ENCODE measurements at regions of chr3 and their contacts with region 1.

Region 1: DNA sequence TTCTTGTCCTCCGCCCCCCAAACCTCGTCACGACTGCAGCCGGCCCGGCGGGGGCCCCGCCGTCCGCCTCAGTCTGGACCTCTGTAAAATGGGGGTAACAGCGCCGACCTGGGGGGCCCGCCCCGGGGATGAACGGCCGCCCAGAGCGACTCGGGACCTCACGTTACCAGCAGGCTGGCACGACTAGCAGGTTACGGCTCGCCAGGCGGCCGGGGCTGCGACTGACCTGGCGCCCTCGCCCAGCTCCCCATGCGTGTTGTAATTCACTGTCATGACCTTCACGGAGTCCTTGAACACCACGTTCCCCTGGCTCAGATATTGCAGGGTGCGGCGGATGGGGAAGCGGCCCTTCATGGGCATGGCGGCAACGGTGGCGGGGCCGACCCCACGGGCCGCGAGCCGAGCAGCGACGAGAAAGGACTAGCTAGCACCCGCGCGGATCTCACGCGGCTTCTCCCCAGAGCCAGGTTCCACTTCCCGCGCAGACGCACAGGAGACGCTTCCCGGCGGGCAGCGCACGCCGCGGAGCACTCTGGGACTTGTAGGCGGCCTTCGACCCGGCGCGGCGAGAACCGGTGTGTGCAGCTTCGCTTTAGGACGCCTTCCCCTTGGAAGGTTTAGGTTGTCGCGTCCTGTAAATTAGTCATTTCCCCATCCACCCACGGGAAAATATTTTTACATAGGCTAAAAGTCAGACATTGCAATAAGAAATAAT is at the start of gene MRPS25:
- DNase-seq: peak; percentile 90
- H3K4me3 Mint-ChIP-seq: peak within 1 kb of the TSS; percentile 96
- H3K27ac Mint-ChIP-seq: peak within 1 kb of the TSS; percentile 95
- H3K4me1 Mint-ChIP-seq: peaks cover 20% of the 10 kb centered on the region
- H3K27me3 Mint-ChIP-seq: no peaks in the 10 kb centered on the region
- total RNA-seq, gene MRPS25: 96.5 and 105 TPM in 2 replicates

Region 2: DNA sequence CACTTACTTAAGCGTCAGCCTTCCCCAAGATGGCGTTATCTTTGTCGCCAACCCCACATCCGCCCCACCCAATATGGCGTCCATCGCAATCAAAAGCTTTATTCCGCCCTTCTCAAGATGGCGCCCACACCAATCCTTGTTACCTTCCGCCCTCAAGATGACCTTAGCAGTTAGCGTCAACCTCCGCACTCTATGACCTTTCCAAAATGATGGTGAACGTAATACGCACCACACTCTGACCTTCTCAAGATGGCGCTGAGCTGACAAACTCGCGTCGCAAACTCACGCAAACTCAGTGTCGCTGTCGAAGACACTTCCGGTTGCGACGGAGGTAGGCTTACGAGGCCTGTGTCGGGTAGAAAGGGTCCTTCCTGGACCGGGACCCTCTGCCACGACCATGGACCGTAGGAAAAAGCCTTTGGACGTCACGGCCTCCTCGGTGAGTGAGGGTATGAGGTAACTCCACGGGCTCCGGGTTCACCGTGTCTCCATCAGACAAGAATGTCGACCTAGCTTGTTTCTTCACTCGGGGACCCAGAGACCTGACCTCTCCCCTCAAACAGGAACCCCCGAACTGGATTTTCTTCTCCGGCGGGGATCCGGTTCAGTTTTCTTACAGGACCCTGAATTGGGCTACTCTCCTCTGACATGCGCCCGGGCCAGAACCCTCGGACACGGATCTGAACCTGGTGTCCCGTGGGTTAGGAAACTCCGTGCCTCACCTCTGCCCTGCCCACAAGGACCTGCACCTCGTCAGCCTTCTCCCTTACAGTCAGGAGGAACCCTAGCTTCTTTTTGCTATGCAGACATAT is 413.3 kb before region 1 on chr3 and contains the start of gene CCDC174:
- intact Hi-C with region 1: loop called (anchors 1 kb)
- DNase-seq: peak; percentile 94
- H3K4me3 Mint-ChIP-seq: peak within 1 kb of the TSS; percentile 99
- H3K27ac Mint-ChIP-seq: peak within 1 kb of the TSS; percentile 90
- H3K4me1 Mint-ChIP-seq: peaks cover 38% of the 10 kb centered on the region
- H3K27me3 Mint-ChIP-seq: peaks cover 4% of the 10 kb centered on the region
- total RNA-seq, gene CCDC174: 16.6 and 21.7 TPM in 2 replicates

Region 3: GRCh38 chr3:15051531-15051930 is 13.5 kb before region 1 on chr3:
- intact Hi-C with region 1: loop called (anchors 1 kb)
- DNase-seq: peak; percentile 17
- H3K4me3 Mint-ChIP-seq: no peak overlapping the region
- H3K27ac Mint-ChIP-seq: no peak overlapping the region
- H3K4me1 Mint-ChIP-seq: peaks cover 16% of the 10 kb centered on the region
- H3K27me3 Mint-ChIP-seq: no peaks in the 10 kb centered on the region

Region 4: DNA sequence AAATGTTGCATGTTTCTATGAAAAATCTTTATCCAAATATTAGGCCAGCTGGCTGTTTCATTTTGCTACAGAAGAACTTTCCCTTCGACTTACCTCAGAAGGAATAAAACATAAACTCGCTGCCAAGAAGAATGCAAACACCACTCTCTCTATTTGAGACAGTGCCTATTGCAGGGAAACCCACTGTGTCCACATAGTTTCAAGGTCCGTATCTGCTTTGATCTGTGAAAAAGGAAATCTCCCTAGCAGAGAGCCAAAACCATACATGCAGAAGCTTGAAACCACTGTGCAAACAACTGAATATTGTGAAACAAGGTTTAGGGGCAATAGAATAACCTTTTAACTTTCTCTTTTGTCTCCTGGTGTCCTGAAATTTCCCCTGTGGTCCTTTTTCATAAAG is 106.1 kb after region 1 on chr3:
- intact Hi-C with region 1: no loop called
- DNase-seq: no peak
- H3K4me3 Mint-ChIP-seq: no peak overlapping the region
- H3K27ac Mint-ChIP-seq: no peak overlapping the region
- H3K4me1 Mint-ChIP-seq: peaks cover 4% of the 10 kb centered on the region
- H3K27me3 Mint-ChIP-seq: peaks cover 33% of the 10 kb centered on the region